ENCODE measurements at regions of chr10 and their contacts with region 1.

Region 1: GRCh38 chr10:92517034-92517655 is 56.7 kb downstream of the IDE start:
- DNase-seq: peak; percentile 64
- ATAC-seq: peak; percentile 96
- H3K4me3 ChIP-seq: no peak overlapping the region
- H3K27ac ChIP-seq: no peak overlapping the region
- H3K4me1 ChIP-seq: no peaks in the 10 kb centered on the region
- H3K27me3 ChIP-seq: no peaks in the 10 kb centered on the region
- CTCF ChIP-seq: peak; percentile 71 to 84 (median 73); a peak in 5 of 6 replicates
- POLR2A ChIP-seq: no peak
- RAD21 ChIP-seq: peak; percentile 77

Region 2: GRCh38 chr10:92527716-92528115 is 10.6 kb after region 1 on chr10:
- CTCF ChIA-PET with region 1: interaction called, 22 read pairs
- POLR2A ChIA-PET with region 1: no interaction called
- RAD21 ChIA-PET with region 1: no interaction called
- intact Hi-C with region 1: no loop called
- DNase-seq: no peak
- ATAC-seq: no peak
- H3K4me3 ChIP-seq: no peak overlapping the region
- H3K27ac ChIP-seq: no peak overlapping the region
- H3K4me1 ChIP-seq: no peaks in the 10 kb centered on the region
- H3K27me3 ChIP-seq: no peaks in the 10 kb centered on the region
- CTCF ChIP-seq: no peak
- POLR2A ChIP-seq: no peak
- RAD21 ChIP-seq: no peak

Region 3: GRCh38 chr10:92573798-92574547 is 56.8 kb after region 1 on chr10 and contains the start of gene IDE:
- CTCF ChIA-PET with region 1: interaction called, 26 read pairs
- POLR2A ChIA-PET with region 1: interaction called, 5 read pairs
- RAD21 ChIA-PET with region 1: interaction called, 3 to 4 read pairs
- intact Hi-C with region 1: loop called (anchors 1 kb)
- DNase-seq: peak; percentile 77
- ATAC-seq: peak; percentile 80
- H3K4me3 ChIP-seq: peak within 1 kb of the TSS; percentile 74 to 88
- H3K27ac ChIP-seq: peak within 1 kb of the TSS; percentile 97
- H3K4me1 ChIP-seq: peaks cover 17 to 26% of the 10 kb centered on the region in 2 experiments
- H3K27me3 ChIP-seq: no peaks in the 10 kb centered on the region
- CTCF ChIP-seq: peak; percentile 68 to 82 (median 73); a peak in 5 of 6 replicates
- POLR2A ChIP-seq: peak; percentile 73
- RAD21 ChIP-seq: peak; percentile 83
- total RNA-seq, gene IDE: 55.8 TPM

Region 4: GRCh38 chr10:92757066-92757710 is 240.0 kb after region 1 on chr10:
- CTCF ChIA-PET with region 1: no interaction called
- POLR2A ChIA-PET with region 1: no interaction called
- RAD21 ChIA-PET with region 1: no interaction called
- intact Hi-C with region 1: no loop called
- DNase-seq: peak; percentile 29
- ATAC-seq: peak; percentile 83
- H3K4me3 ChIP-seq: no peak overlapping the region
- H3K27ac ChIP-seq: no peak overlapping the region
- H3K4me1 ChIP-seq: peaks cover 7 to 8% of the 10 kb centered on the region in 2 experiments; a peak in 3 of 4 replicates
- H3K27me3 ChIP-seq: no peaks in the 10 kb centered on the region
- CTCF ChIP-seq: peak in 1 of 3 experiments; percentile 22; a peak in 1 of 6 replicates
- POLR2A ChIP-seq: no peak
- RAD21 ChIP-seq: no peak

Region 5: DNA sequence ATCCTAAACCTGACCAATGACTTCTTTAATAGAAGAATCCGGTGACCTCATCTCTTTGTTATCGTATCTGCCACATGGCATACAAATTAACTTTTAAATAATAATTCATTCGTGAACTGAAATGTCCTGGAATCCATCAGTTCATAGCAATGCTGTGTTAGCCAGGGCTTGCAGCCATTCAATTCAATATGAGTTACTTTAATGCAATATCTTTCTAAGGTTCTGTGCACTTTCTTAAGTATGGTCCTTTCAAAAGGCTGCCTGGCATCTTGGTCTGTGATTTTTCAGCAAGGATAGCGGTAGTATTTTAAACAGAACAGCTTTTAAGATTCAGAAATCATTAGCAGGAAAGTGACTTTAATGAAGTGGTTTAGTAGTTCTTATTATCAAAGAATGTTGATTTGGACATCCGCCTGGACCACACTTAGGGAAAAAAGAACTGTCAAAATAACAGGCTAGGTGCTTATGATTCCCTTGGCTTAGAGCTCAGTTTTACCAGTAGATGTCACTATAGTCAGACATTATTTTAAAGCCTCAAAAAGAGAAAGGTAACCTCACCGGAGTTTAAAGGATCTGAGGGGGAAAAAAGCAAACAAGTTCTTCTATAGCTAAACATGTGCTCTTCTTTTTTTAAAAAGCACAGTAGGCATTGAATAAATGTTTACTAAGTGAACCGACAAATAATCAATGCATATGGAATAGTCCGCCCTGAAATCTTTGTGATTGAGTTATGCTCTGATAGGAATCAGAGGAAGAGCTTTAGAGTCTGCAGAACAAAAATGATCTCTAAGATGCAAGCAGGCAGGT is 1399.3 kb after region 1 on chr10:
- CTCF ChIA-PET with region 1: no interaction called
- POLR2A ChIA-PET with region 1: no interaction called
- RAD21 ChIA-PET with region 1: no interaction called
- intact Hi-C with region 1: no loop called
- DNase-seq: peak; percentile 22
- ATAC-seq: peak; percentile 78
- H3K4me3 ChIP-seq: no peak overlapping the region
- H3K27ac ChIP-seq: no peak overlapping the region
- H3K4me1 ChIP-seq: no peaks in the 10 kb centered on the region
- H3K27me3 ChIP-seq: no peaks in the 10 kb centered on the region
- CTCF ChIP-seq: peak; percentile 51 to 68 (median 60); a peak in 5 of 6 replicates
- POLR2A ChIP-seq: no peak
- RAD21 ChIP-seq: peak; percentile 70